Ascending aorta (tissue), 2 donors: ENCODE measurements at regions of chr1 and their contacts with region 1.

Region 1: DNA sequence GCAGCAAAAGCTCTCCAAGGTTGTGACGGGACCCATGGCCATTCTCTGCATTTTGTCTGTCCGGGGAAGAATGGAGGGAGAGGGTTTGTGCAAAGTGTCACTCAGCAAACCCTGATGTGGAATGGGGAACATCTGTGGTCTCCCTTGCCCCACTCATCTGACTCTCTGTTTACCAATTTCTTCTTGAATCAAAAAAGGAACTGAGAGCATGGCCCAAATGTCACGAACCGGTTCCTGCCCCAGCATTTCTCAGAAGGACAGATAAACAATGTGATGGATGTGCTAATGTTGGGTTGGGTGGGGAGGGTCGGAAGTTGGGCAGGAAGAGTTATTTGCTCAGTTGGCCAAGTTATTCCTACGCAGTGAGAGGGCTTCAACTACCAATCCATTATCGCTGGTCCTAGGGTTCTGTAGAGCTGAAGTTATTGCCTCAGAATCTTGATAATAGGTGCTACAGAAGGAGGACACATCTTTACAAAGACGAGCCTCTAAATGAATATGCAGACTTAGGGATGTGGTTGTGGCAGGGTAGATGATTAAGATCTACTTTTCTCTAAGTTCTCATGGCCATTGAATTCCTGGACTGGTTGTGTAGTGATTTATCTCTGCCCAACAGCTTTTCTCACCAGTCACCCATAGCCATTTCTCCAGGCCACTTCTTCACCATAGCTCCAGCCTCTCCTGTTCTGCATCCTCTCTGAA is 9.6 kb upstream of the DUSP12 start:
- DNase-seq: no peak
- H3K4me3 ChIP-seq: no peak overlapping the region
- H3K27ac ChIP-seq: no peak overlapping the region
- H3K4me1 ChIP-seq: no peaks in the 10 kb centered on the region
- H3K27me3 ChIP-seq: no peaks in the 10 kb centered on the region
- CTCF ChIP-seq: no peak

Region 2: DNA sequence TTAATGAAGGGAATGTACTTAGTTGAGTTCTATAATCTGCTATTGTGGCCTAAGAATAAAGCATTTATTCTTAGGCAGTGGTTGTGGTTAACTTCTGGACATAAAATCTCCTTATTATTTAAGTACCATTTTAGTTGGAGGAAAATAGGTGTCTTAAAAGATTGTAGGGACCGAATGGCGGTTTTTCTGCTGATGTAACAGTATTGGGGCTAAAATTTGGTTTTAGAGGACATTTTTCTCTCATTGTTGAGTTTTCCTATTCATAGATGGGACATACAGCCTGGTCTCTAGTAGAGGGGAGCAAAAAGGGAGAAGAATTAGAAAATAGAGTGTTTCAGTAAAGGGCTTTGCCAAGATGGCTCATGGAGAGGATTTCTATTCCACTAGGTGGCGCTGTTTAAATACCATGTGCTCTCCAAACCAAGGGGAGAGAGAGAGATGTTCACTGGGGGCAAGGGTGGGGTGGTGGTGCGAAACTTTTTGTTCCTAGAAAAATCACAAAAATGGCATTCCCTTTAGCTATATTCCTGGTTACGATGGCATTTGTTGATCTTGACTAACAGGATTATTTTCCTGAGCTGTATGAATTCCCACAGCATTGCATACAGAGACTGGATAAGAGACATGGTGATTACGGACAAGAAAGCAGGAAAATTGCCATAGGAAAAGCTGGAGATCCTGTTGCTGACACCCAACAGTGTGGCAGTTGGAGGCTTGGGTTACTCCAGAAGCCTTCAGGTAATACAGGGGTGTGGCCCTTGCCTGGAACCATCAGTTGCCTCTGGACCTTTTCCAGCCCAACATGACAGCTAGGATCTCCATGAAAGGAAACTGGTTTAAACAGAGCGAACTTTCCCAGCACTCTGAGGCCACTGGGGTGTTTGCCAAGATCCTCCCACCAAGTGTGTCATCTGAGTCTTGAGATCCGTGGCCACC is 252.9 kb before region 1 on chr1:
- intact Hi-C with region 1: loop called (anchors 1 kb)
- DNase-seq: peak in 1 of 2 donors; percentile 70
- H3K4me3 ChIP-seq: peak overlapping the region in 1 of 2 donors; percentile 15
- H3K27ac ChIP-seq: no peak overlapping the region
- H3K4me1 ChIP-seq: no peaks in the 10 kb centered on the region
- H3K27me3 ChIP-seq: no peaks in the 10 kb centered on the region
- CTCF ChIP-seq: peak; percentile 59 to 74 (median 74)